Heart left ventricle (tissue), 16 donors: ENCODE measurements at regions of chr12 and their contacts with region 1.

Region 1: GRCh38 chr12:110280779-110281548 is at the start of gene ATP2A2:
- DNase-seq: peak; percentile 92 to 96 (median 92)
- ATAC-seq: peak; percentile 69 to 93 (median 84)
- H3K4me3 ChIP-seq: peak within 1 kb of the TSS; percentile 76 to 96 (median 92)
- H3K27ac ChIP-seq: peak within 1 kb of the TSS; percentile 91 to 100 (median 98)
- H3K4me1 ChIP-seq: peaks cover 0 to 51% (median 34%) of the 10 kb centered on the region in 12 donors
- H3K27me3 ChIP-seq: no peaks in the 10 kb centered on the region
- CTCF ChIP-seq: peak in 1 of 12 donors; percentile 1
- POLR2A ChIP-seq: peak; percentile 71 to 99
- total RNA-seq, gene ATP2A2: 1,194 to 2,963 (median 1,871) TPM

Region 2: GRCh38 chr12:110245369-110245772 is 35.6 kb before region 1 on chr12:
- intact Hi-C with region 1: loop called in 6 of 10 experiments (anchors 2 to 5 kb)
- DNase-seq: peak in 3 of 5 donors; percentile 77 to 82 (median 80)
- ATAC-seq: peak in 2 of 4 donors; percentile 34 to 52
- H3K4me3 ChIP-seq: no peak overlapping the region
- H3K27ac ChIP-seq: peak overlapping the region; percentile 71 to 97 (median 88)
- H3K4me1 ChIP-seq: peaks cover 0 to 55% (median 40%) of the 10 kb centered on the region in 12 donors
- H3K27me3 ChIP-seq: no peaks in the 10 kb centered on the region
- CTCF ChIP-seq: peak in 9 of 12 donors; percentile 9 to 49 (median 26)
- POLR2A ChIP-seq: no peak

Region 3: DNA sequence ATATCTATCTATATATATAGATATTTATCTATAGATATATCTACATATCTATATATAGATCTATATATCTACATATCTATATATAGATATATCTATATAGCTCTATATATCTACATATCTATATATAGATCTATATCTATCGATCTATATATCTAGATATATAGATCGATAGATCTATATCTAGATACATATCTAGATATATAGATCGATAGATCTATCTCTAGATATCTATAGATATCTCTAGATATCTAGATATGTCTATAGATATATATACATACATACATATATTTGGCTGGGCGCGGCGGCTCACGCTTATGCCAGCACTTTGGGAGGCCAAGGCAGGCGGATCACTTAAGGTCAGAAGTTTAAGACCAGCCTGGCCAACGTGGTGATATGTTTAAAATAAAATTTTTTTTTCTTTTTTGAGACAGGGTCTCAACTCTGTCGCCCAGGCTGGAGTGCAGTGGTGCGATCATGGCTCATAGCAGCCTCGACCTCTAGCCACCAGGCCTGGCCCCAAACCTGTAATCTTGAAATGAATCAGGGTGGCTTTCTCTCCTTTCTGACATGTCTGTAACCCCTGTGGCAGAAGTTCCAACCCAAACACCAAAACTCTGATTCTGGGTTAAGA is 151.1 kb after region 1 on chr12:
- intact Hi-C with region 1: loop called in 1 of 10 experiments (anchors 10 kb)
- DNase-seq: no peak
- ATAC-seq: no peak
- H3K4me3 ChIP-seq: peak overlapping the region in 11 of 12 donors; percentile 27 to 67 (median 56)
- H3K27ac ChIP-seq: peak overlapping the region in 3 of 12 donors; percentile 39 to 62 (median 55)
- H3K4me1 ChIP-seq: peaks cover 0 to 6% (median 0%) of the 10 kb centered on the region in 12 donors
- H3K27me3 ChIP-seq: no peaks in the 10 kb centered on the region
- CTCF ChIP-seq: no peak
- POLR2A ChIP-seq: no peak

Region 4: GRCh38 chr12:110639336-110640141 is 358.6 kb after region 1 on chr12:
- intact Hi-C with region 1: no loop called
- DNase-seq: no peak
- ATAC-seq: peak in 3 of 4 donors; percentile 38 to 54 (median 52)
- H3K4me3 ChIP-seq: no peak overlapping the region
- H3K27ac ChIP-seq: peak overlapping the region in 10 of 12 donors; percentile 10 to 80 (median 64)
- H3K4me1 ChIP-seq: peaks cover 0 to 35% (median 20%) of the 10 kb centered on the region in 12 donors
- H3K27me3 ChIP-seq: no peaks in the 10 kb centered on the region
- CTCF ChIP-seq: no peak
- POLR2A ChIP-seq: no peak